Activated T-helper 2 cell treated with anti-CD3 and anti-CD28 coated beads, Interferon-gamma antibody, Interleukin-2, Interleukin-4, amounts not matched to agents 10 μg/mL and 5 μg/mL and 100 μg/mL, durations not matched to agents 14 hours and 24 hours and 36 hours (primary cell): ENCODE measurements at regions of chr11 and their contacts with region 1.

Region 1: DNA sequence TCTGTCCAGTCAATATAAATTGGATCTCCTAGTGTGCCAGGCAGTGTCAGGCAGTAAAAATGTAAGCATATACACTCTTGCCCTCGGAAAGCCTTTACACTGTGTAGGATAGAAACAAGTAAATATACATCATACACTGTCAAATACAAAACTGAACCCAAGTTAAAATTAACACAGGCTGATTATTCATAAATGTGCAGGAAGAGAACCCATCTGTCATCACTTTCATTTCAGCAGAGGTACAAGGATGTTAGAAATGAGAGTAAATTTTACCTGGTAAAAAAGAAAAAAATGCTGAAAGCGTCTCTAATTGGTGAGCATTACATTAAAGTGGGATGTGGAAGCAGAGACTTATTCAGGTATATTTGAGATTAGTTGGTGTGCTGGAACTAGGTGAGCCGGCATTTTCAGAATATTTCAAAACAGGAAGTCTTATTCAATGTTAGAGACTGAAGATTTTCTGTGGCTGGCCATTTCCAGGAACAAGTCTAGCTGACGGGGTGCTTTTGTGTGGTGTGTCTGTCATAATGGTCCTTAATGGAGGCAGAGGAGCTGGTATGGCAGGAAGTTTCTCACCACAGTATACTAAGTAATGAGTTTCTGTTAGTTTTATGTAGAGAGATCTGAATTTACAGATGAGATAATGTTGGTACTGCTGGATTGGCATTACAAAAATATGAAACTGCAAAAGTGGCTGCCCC is 192.6 kb downstream of the CASP12 start:
- DNase-seq: peak; percentile 77
- H3K4me3 Mint-ChIP-seq: peak overlapping the region; percentile 74
- H3K27ac Mint-ChIP-seq: peak overlapping the region; percentile 90
- H3K4me1 Mint-ChIP-seq: peaks cover 50% of the 10 kb centered on the region
- H3K27me3 Mint-ChIP-seq: no peaks in the 10 kb centered on the region

Region 2: DNA sequence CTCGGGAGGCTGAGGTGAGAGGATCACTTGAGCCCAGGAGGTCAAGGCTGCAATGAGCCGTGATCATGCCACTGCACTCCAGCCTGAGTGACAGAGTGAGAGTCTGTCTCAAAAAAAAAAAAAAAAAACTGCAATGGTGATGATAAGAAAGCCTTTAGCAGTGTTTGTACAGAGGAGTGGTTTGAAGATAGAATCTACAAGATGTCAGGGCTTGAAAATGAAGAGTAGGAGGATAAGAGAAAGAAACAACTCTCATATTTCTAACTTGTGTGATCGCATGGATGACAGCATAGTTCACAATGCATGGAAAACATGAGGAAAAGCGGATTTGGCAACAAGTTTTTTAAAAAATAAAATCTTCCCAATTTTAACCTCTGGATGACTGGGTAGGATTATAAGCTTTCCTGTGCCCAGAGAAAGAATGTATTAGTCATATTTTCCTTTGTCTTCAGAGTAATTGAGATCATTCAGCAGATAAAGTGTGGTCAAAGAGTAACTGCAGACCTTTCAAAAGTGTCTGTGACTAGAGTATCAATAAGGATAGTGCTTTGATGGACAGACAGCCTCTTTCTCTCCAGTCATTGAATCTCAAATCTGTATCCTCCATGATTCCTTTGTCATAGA is 135.4 kb before region 1 on chr11:
- intact Hi-C with region 1: loop called (anchors 1 kb)
- DNase-seq: no peak
- H3K4me3 Mint-ChIP-seq: no peak overlapping the region
- H3K27ac Mint-ChIP-seq: no peak overlapping the region
- H3K4me1 Mint-ChIP-seq: peaks cover 13% of the 10 kb centered on the region
- H3K27me3 Mint-ChIP-seq: peaks cover 2% of the 10 kb centered on the region

Region 3: GRCh38 chr11:104625246-104625645 is 80.4 kb before region 1 on chr11:
- intact Hi-C with region 1: loop called (anchors 1 kb)
- DNase-seq: no peak
- H3K4me3 Mint-ChIP-seq: no peak overlapping the region
- H3K27ac Mint-ChIP-seq: no peak overlapping the region
- H3K4me1 Mint-ChIP-seq: peaks cover 18% of the 10 kb centered on the region
- H3K27me3 Mint-ChIP-seq: no peaks in the 10 kb centered on the region

Region 4: DNA sequence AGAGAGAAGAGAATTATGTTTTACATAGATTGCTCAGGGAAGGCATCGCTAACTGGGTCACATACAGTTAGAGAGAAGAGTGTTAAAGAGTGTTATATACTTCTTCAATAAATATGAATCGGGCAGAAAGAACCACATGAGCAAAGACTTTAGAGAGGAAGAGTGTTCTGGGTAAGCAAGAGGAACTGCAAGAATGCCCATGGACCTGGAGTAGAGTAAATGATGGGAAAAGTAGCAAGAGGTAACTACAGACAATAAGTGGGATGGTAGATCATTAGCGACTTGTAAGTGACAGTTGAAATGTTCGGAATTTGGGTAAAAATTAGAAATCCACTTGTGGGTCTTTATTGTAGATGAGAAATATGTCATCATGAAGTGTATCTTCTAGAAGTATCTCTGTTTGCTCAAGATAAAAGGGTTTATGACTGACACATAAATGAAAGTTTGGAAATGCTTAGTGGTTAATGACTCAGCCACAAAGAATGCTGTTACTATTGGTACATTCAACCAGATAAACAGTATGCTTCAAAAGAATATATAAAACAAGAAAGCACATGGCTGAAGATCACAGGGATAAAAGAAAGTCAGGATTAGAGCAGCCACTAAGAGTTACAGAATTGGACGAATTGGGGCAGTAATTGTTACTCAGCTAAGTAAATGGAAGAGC is 36.7 kb before region 1 on chr11:
- intact Hi-C with region 1: loop called (anchors 1 kb)
- DNase-seq: no peak
- H3K4me3 Mint-ChIP-seq: no peak overlapping the region
- H3K27ac Mint-ChIP-seq: no peak overlapping the region
- H3K4me1 Mint-ChIP-seq: peaks cover 21% of the 10 kb centered on the region
- H3K27me3 Mint-ChIP-seq: peaks cover 13% of the 10 kb centered on the region

Region 5: DNA sequence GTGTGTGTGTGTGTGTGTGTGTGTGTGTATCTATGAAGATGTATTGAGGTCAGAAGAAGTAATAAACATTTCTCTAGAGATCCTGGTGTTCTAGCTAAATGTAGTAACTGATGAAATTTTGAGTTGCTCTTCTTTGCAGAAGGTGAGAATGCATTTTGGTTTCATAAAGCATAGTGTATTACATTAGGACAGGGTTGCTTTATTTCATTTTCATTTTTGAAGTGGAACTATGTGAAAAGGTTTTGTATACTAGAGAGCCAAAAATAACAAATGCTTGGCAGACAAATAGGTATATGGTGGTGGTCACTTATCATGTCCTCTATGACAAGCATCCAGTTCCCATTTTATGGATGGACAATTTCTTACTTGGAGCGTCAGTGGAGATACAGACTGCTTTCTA is 93.6 kb after region 1 on chr11:
- intact Hi-C with region 1: loop called (anchors 5 kb)
- DNase-seq: no peak
- H3K4me3 Mint-ChIP-seq: no peak overlapping the region
- H3K27ac Mint-ChIP-seq: peak overlapping the region; percentile 61
- H3K4me1 Mint-ChIP-seq: peaks cover 29% of the 10 kb centered on the region
- H3K27me3 Mint-ChIP-seq: no peaks in the 10 kb centered on the region

Region 6: DNA sequence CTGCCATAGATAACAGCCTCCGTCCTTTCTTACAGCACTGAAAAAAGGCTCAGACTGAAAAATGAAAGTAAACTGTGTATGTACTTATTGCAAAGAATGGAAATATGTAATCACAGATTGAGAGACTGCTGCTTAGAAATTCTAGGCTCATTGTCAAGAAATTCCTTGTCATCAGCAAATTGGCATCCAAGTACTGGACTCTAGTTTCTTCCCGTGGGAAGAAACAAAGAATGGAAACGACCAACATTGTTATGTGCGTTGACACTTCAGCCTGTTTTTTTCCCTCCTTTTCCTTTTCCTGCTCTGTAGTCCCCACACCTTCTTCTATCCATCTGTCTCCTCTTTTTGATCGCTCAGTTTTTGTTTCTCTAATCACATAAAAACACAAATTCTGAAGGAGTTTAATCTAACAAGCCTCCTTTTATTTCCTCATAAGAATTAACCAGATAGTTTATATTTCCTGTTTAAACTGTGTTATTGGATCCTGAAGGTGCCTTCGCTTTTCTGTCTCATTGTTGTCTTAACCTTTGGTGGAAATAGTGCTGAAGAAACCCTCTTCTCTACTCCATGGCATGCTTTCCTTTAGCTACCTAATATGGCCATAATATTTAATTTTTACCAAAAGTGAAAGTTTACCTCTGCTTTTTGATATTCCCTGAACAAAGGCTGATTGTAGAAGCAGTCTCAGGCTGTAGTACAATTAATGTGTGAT is 212.6 kb after region 1 on chr11:
- intact Hi-C with region 1: loop called (anchors 10 kb)
- DNase-seq: no peak
- H3K4me3 Mint-ChIP-seq: peak overlapping the region; percentile 81
- H3K27ac Mint-ChIP-seq: peak overlapping the region; percentile 71
- H3K4me1 Mint-ChIP-seq: peaks cover 37% of the 10 kb centered on the region
- H3K27me3 Mint-ChIP-seq: no peaks in the 10 kb centered on the region

Region 7: DNA sequence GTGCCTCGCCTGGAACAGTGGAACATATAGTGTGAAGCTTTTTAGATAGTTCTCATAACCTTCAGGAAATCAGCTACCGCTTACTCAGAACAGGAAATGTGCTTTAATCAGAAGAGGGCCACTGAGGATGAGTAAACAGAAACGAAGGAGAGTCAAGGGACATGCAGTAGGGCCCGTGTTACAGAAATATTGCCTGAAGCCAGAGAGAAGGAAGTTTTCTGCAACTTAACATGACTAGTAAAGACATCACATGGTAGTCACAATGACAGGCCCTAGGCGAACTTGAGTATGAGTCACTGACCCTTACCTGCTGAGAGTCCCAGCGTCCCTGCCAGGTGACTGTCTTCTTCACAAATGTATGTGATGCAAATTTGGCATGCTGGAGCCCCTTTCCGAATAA is 394.6 kb after region 1 on chr11:
- intact Hi-C with region 1: loop called (anchors 2 kb)
- DNase-seq: no peak
- H3K4me3 Mint-ChIP-seq: peak overlapping the region; percentile 79
- H3K27ac Mint-ChIP-seq: peak overlapping the region; percentile 49
- H3K4me1 Mint-ChIP-seq: peaks cover 25% of the 10 kb centered on the region
- H3K27me3 Mint-ChIP-seq: no peaks in the 10 kb centered on the region